GM12878 (cell line): ENCODE measurements at regions of chrX and their contacts with region 1.

Region 1: GRCh38 chrX:109856974-109857373 is 123.9 kb upstream of the ACSL4 start:
- DNase-seq: no peak
- ATAC-seq: peak; percentile 51
- H3K4me3 ChIP-seq: no peak overlapping the region
- H3K27ac ChIP-seq: no peak overlapping the region
- H3K4me1 ChIP-seq: no peaks in the 10 kb centered on the region
- H3K27me3 ChIP-seq: no peaks in the 10 kb centered on the region
- CTCF ChIP-seq: peak; percentile 62 to 76 (median 63)
- EP300 ChIP-seq: 0 out of 4 replicates have a peak, but pooled peaks of 1 of the 2 experiments have one; percentile 34
- POLR2A ChIP-seq: no peak
- RAD21 ChIP-seq: peak; percentile 81

Region 2: DNA sequence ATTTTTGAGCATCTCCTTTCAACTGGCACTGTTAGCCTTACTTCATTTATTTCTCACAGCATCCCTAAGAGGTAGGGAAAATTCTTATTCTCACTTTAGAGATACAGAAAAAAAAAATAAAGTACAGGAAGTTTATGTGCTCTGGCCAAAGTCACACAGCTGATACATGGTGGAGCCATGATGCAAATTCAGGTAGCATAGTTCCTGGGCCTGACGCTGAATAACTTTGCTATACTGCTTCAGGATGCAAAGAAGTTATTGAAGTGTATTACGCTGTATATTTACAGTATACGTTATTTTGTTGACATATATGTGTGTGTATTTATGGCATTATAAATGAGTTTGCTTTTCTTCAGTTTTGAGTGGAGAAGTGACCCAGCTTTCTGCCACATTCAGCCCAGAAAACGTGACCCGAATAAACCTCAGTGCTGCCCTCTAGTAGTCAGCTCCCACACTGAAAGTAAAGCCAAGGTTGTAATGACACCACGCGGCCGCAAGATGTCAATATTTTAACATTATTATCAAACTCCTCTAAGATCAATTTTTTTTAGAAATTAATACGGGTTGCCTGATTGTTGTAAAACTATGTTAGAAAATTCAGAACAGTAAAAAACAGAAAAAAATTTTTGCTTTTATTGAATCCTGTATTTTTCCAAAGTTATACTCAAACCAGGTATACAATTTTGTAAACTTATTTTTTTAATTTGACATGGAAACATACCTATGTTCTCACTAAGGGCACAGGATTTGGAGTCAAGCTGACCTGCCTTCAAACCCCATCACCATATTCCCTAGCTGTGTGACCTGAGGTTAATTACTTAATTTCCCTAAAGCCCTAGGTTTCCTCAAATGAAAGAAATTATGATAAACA is 371.3 kb before region 1 on chrX:
- CTCF ChIA-PET with region 1: interaction called, 8 read pairs
- POLR2A ChIA-PET with region 1: no interaction called
- RAD21 ChIA-PET with region 1: interaction called, 4 read pairs
- SMC1A ChIA-PET with region 1: interaction called, 24 read pairs
- in situ Hi-C with region 1: no loop called
- intact Hi-C with region 1: no loop called
- DNase-seq: peak; percentile 34
- ATAC-seq: peak; percentile 84
- H3K4me3 ChIP-seq: no peak overlapping the region
- H3K27ac ChIP-seq: no peak overlapping the region
- H3K4me1 ChIP-seq: no peaks in the 10 kb centered on the region
- H3K27me3 ChIP-seq: no peaks in the 10 kb centered on the region
- CTCF ChIP-seq: peak; percentile 93 to 99 (median 99); a peak in 5 of 6 replicates
- EP300 ChIP-seq: no peak
- POLR2A ChIP-seq: no peak
- RAD21 ChIP-seq: peak; percentile 91

Region 3: DNA sequence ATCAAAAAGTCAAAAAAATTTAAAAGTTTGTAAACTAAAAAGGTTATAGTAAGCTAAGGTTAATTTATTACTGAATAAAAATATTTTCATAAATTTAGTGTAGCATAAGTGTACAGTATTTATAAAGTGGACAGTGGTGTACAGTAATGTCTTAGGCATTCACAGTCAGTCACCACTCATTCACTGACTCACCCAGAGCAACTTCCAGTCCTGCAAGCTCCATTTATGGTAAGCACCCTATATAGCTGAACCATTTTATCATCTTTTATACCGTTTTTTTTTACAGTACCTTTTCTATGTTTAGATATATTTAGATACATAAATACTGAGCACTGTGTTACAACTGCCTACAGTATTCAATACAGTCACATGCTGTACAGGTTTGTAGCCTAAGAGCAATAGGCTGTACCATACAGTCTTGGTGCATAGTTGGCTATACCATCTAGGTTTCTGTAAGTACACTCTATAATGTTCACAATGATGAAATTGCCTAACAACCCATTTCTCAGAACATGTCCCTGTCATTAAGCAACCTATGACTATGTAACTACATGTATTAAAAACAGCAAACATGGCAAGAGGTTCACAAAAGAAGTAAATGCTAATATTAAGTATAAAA is 142.5 kb before region 1 on chrX:
- CTCF ChIA-PET with region 1: interaction called, 337 read pairs
- POLR2A ChIA-PET with region 1: interaction called, 9 read pairs
- RAD21 ChIA-PET with region 1: interaction called, 257 read pairs
- SMC1A ChIA-PET with region 1: interaction called, 403 read pairs
- in situ Hi-C with region 1: loop called (anchors 5 kb)
- intact Hi-C with region 1: loop called (anchors 1 kb)
- DNase-seq: no peak
- ATAC-seq: peak; percentile 16; the same call in 2 of the 3 replicates
- H3K4me3 ChIP-seq: no peak overlapping the region
- H3K27ac ChIP-seq: no peak overlapping the region
- H3K4me1 ChIP-seq: peaks cover 3% of the 10 kb centered on the region
- H3K27me3 ChIP-seq: no peaks in the 10 kb centered on the region
- CTCF ChIP-seq: no peak
- EP300 ChIP-seq: no peak
- POLR2A ChIP-seq: no peak
- RAD21 ChIP-seq: no peak

Region 4: GRCh38 chrX:109732780-109733657 is 124.0 kb before region 1 on chrX and contains the start of gene ACSL4:
- CTCF ChIA-PET with region 1: interaction called, 14 read pairs
- POLR2A ChIA-PET with region 1: interaction called, 4 read pairs
- RAD21 ChIA-PET with region 1: interaction called, 31 read pairs
- SMC1A ChIA-PET with region 1: interaction called, 13 read pairs
- in situ Hi-C with region 1: no loop called
- intact Hi-C with region 1: loop called (anchors 5 kb)
- DNase-seq: no peak
- ATAC-seq: peak; percentile 91
- H3K4me3 ChIP-seq: peak within 1 kb of the TSS; percentile 69
- H3K27ac ChIP-seq: peak within 1 kb of the TSS; percentile 88
- H3K4me1 ChIP-seq: no peaks in the 10 kb centered on the region
- H3K27me3 ChIP-seq: no peaks in the 10 kb centered on the region
- CTCF ChIP-seq: no peak
- EP300 ChIP-seq: no peak
- POLR2A ChIP-seq: peak; percentile 84
- RAD21 ChIP-seq: no peak
- polyA plus RNA-seq, gene ACSL4: 20.7 to 23.6 TPM

Region 5: DNA sequence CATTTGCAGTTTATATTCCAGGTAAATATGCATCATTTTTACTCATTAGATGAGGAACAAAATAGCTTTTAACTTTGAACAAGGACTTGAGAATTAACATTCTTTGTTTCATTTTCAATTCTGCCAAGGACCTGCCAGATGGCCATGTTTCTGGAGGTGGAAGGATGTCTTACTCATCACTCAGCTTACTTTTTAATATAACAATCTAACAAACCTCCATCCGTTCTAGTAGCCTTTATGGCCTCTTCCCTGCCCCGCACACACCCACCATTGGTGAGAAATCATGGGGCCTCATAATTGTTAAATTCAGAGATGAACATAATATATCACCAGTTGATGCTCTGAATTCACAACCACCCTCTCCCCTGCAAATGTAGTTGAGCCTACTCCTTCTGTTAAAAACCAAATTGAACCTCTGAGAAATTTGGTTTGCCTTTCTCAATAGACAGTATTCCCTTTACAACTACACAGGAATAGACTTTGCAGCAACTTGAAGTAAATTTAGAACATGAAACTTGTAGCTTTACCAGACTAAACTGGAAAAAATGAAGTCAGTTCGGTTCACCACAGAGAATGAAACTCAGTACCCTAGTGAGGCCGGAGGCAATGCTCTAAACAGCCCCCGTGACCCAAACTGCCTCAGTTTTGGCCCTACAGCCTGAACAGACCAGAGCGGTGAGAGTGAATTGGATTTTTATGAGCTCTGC is 73.8 kb before region 1 on chrX:
- CTCF ChIA-PET with region 1: interaction called, 21 read pairs
- POLR2A ChIA-PET with region 1: no interaction called
- RAD21 ChIA-PET with region 1: interaction called, 12 read pairs
- SMC1A ChIA-PET with region 1: interaction called, 12 read pairs
- in situ Hi-C with region 1: no loop called
- intact Hi-C with region 1: no loop called
- DNase-seq: no peak
- ATAC-seq: peak; percentile 92
- H3K4me3 ChIP-seq: no peak overlapping the region
- H3K27ac ChIP-seq: peak overlapping the region; percentile 81
- H3K4me1 ChIP-seq: peaks cover 5% of the 10 kb centered on the region; the same call in 1 of the 2 replicates
- H3K27me3 ChIP-seq: no peaks in the 10 kb centered on the region
- CTCF ChIP-seq: no peak
- EP300 ChIP-seq: no peak
- POLR2A ChIP-seq: no peak
- RAD21 ChIP-seq: no peak

Region 6: GRCh38 chrX:109840585-109840984 is 16.4 kb before region 1 on chrX:
- CTCF ChIA-PET with region 1: interaction called, 57 read pairs
- POLR2A ChIA-PET with region 1: interaction called, 6 read pairs
- RAD21 ChIA-PET with region 1: interaction called, 32 read pairs
- SMC1A ChIA-PET with region 1: interaction called, 72 read pairs
- in situ Hi-C with region 1: no loop called
- intact Hi-C with region 1: no loop called
- DNase-seq: no peak
- ATAC-seq: peak; percentile 36
- H3K4me3 ChIP-seq: no peak overlapping the region
- H3K27ac ChIP-seq: no peak overlapping the region
- H3K4me1 ChIP-seq: peaks cover 6% of the 10 kb centered on the region; the same call in 1 of the 2 replicates
- H3K27me3 ChIP-seq: no peaks in the 10 kb centered on the region
- CTCF ChIP-seq: no peak
- EP300 ChIP-seq: no peak
- POLR2A ChIP-seq: no peak
- RAD21 ChIP-seq: no peak

Region 7: DNA sequence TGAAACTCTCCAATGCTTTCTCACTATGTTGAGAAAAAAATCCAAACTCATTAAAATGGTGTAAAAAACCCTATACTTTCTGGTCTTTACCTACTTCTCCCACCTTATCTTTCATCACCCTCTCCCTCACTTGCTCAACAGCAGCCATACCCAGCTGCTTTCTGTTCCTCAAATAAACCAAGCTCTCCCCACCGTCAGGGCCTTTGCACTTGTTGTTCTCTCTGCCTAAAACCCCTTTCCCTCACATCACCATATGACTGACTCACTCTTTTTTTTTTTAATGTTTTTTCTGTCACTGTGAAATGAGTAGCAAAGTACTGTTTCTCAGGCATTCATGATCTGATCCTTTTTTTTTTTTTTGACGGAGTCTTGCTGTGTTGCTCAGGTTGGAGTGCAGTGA is 23.7 kb after region 1 on chrX:
- CTCF ChIA-PET with region 1: interaction called, 78 read pairs
- POLR2A ChIA-PET with region 1: interaction called, 5 read pairs
- RAD21 ChIA-PET with region 1: interaction called, 18 read pairs
- SMC1A ChIA-PET with region 1: interaction called, 56 read pairs
- in situ Hi-C with region 1: no loop called
- intact Hi-C with region 1: no loop called
- DNase-seq: peak; percentile 39
- ATAC-seq: peak; percentile 98
- H3K4me3 ChIP-seq: no peak overlapping the region
- H3K27ac ChIP-seq: no peak overlapping the region
- H3K4me1 ChIP-seq: no peaks in the 10 kb centered on the region
- H3K27me3 ChIP-seq: no peaks in the 10 kb centered on the region
- CTCF ChIP-seq: no peak
- EP300 ChIP-seq: peak in 1 of 2 experiments; percentile 28; a peak in 1 of 4 replicates
- POLR2A ChIP-seq: no peak
- RAD21 ChIP-seq: no peak

Region 8: GRCh38 chrX:110003167-110004156 is 146.5 kb after region 1 on chrX:
- CTCF ChIA-PET with region 1: no interaction called
- POLR2A ChIA-PET with region 1: no interaction called
- RAD21 ChIA-PET with region 1: no interaction called
- SMC1A ChIA-PET with region 1: no interaction called
- in situ Hi-C with region 1: no loop called
- intact Hi-C with region 1: no loop called
- DNase-seq: no peak
- ATAC-seq: peak; percentile 44
- H3K4me3 ChIP-seq: peak overlapping the region; percentile 68
- H3K27ac ChIP-seq: peak overlapping the region; percentile 10; the same call in 1 of the 2 replicates
- H3K4me1 ChIP-seq: peaks cover 8% of the 10 kb centered on the region
- H3K27me3 ChIP-seq: no peaks in the 10 kb centered on the region
- CTCF ChIP-seq: no peak
- EP300 ChIP-seq: no peak
- POLR2A ChIP-seq: no peak
- RAD21 ChIP-seq: no peak